Astrocyte of the cerebellum (primary cell): ENCODE measurements at regions of chr9 and their contacts with region 1.

Region 1: DNA sequence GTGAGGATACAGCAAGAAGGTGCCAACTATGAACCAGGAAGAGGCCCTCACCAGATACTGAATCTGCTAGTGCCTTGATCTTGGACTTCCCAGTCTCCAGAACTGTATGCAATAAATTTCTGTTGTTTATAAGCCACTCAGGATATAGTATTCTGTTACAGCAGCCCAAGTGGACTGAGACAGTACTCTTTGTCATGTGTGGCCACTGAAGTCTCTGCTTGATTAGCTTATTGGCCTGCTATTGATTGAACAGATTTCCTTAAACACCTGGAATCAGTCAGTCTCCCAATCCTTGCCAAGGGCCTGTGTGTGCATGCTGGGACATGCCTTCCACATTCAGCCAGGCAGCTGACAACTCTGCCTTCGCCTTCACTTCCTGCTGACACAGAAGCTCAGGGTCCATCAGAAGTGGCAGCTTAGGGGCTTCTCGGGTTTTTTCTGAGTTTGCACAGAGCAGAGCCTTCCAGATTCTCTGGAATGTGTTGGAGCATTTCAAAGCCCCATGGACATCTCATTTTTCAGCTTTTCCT is 13.7 kb upstream of the ROR2 start:
- DNase-seq: no peak
- H3K4me3 ChIP-seq: no peak overlapping the region
- CTCF ChIP-seq: no peak

Region 2: GRCh38 chr9:91775011-91775707 is 188.6 kb before region 1 on chr9:
- in situ Hi-C with region 1: loop called (anchors 5 kb)
- DNase-seq: no peak
- H3K4me3 ChIP-seq: no peak overlapping the region
- CTCF ChIP-seq: peak; percentile 92

Region 3: DNA sequence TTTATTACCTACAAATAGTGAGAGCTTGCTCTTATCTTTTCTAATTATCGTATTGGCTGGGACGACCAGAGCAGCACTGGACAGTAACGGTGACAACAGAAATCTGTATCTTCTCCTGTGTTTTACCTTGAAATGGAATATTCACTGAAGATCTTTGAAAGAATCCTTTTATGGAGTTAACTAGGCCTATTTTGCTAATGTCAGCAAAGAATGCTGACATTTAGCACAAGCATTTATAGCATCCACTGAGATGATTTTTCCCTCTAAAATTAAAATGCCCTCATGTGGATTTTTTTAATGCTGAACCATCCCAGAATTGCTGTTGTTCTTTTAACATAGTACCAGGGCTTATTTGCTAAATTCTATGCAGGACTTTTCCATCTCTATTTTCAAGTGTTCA is 73.1 kb before region 1 on chr9:
- in situ Hi-C with region 1: loop called (anchors 5 kb)
- DNase-seq: no peak
- H3K4me3 ChIP-seq: no peak overlapping the region
- CTCF ChIP-seq: no peak

Region 4: GRCh38 chr9:92048924-92049625 is 85.3 kb after region 1 on chr9:
- in situ Hi-C with region 1: loop called (anchors 5 kb)
- DNase-seq: peak; percentile 19
- H3K4me3 ChIP-seq: no peak overlapping the region
- CTCF ChIP-seq: no peak